GM12878 (cell line): ENCODE measurements at regions of chr18 and their contacts with region 1.

Region 1: DNA sequence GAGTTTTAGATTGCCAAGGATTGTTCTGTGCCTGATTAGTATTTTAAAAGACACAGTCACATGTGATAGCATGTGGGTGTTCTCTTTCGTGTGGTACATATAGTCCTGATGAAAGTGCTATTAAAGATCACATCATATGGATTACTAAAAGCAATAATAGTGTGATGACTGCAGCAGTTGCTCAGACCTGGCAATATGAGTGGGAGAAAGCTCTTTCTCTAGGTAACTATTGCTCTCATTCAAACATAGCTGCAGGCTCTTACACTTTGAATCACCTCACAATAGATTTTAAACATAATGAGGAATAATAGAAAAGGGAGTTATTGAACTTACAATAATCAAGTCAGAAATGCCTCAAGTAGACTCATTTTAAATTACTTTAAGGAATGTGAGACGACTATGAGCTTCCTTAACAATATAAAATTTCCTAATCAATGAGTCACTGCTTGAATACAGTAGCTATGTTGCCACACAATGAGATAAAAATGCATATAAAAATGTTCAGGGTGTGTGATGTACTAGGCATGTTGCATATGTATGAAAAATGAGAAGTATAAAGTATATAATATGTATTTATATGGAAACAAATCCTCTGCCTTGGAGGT is 452.1 kb downstream of the TMX3 start:
- DNase-seq: no peak
- ATAC-seq: no peak
- H3K4me3 ChIP-seq: no peak overlapping the region
- H3K27ac ChIP-seq: no peak overlapping the region
- H3K4me1 ChIP-seq: no peaks in the 10 kb centered on the region
- H3K27me3 ChIP-seq: no peaks in the 10 kb centered on the region
- CTCF ChIP-seq: no peak
- EP300 ChIP-seq: no peak
- POLR2A ChIP-seq: no peak
- RAD21 ChIP-seq: no peak

Region 2: DNA sequence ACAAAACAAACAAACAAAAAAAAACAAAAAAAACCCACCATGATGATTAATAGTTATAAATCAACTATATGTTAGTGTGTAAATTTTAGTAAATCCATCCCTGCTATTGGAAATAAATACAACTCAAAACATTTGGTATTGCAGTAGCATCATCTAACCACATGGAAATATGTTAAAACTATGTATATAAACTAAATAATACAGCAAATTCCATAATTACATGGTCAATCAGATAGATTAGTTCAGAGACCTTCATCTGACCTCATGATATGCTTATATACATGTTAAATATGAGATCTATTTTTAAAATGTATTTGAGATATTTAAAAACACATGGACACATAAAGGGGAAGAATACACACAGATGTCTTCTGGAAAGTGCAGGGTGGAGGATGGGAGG is 67.9 kb after region 1 on chr18:
- CTCF ChIA-PET with region 1: no interaction called
- POLR2A ChIA-PET with region 1: no interaction called
- RAD21 ChIA-PET with region 1: no interaction called
- SMC1A ChIA-PET with region 1: no interaction called
- in situ Hi-C with region 1: no loop called
- intact Hi-C with region 1: loop called (anchors 2 kb)
- DNase-seq: no peak
- ATAC-seq: no peak
- H3K4me3 ChIP-seq: no peak overlapping the region
- H3K27ac ChIP-seq: no peak overlapping the region
- H3K4me1 ChIP-seq: no peaks in the 10 kb centered on the region
- H3K27me3 ChIP-seq: no peaks in the 10 kb centered on the region
- CTCF ChIP-seq: no peak
- EP300 ChIP-seq: no peak
- POLR2A ChIP-seq: no peak
- RAD21 ChIP-seq: no peak